PC-3 (cell line): ENCODE measurements at regions of chr11 and their contacts with region 1.

Region 1: GRCh38 chr11:57363131-57364080 is 17.5 kb downstream of the PRG3 start:
- DNase-seq: no peak
- ATAC-seq: no peak
- H3K4me3 ChIP-seq: no peak overlapping the region
- H3K27ac ChIP-seq: no peak overlapping the region
- H3K4me1 ChIP-seq: no peaks in the 10 kb centered on the region
- H3K27me3 ChIP-seq: 0 out of 2 replicates have a peak, but pooled peaks cover 17% of the 10 kb centered on the region
- CTCF ChIP-seq: no peak

Region 2: DNA sequence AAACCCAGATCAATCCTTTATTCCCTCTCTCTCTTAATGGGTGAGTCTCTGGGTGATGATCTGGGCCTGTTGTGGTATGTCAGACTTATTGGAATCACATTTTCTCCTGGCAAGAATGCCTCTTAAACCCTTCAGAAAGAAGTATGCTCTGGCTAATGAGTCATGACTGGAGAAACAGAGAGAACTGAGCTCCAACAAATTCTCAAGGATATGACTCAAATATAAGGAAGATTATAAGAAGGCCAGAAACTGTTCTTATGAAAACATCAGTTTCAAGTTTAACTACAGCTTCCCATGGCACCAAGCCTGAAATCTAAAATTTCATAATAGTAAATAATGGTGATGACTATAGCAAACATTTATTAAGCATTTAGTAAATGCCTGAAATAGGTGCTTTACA is 290.8 kb before region 1 on chr11:
- CTCF ChIA-PET with region 1: no interaction called
- POLR2A ChIA-PET with region 1: no interaction called
- intact Hi-C with region 1: no loop called
- DNase-seq: peak; percentile 97
- ATAC-seq: peak; percentile 80
- H3K4me3 ChIP-seq: no peak overlapping the region
- H3K27ac ChIP-seq: peak overlapping the region; percentile 92
- H3K4me1 ChIP-seq: peaks cover 27% of the 10 kb centered on the region
- H3K27me3 ChIP-seq: no peaks in the 10 kb centered on the region
- CTCF ChIP-seq: no peak

Region 3: DNA sequence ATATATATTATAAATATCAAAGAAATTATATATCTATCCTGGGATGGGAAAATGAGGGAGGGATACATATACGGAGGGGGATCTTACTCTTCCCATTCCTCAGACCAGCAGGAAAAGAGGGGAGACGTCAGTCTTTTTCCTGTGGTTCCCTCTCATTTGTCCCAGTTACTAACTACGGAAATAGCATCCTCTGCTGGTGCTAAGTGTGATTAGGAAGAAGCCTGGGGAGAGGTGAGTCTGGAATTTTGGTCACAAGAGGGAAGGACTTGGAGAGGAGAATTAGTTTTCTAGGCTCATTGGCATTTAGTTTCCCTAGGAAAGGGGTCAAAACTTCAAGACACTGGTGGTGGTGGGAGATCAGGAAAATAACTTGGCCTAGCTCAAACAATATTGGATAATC is 337.0 kb after region 1 on chr11:
- CTCF ChIA-PET with region 1: no interaction called
- POLR2A ChIA-PET with region 1: interaction called, 18 read pairs
- intact Hi-C with region 1: no loop called
- DNase-seq: no peak
- ATAC-seq: no peak
- H3K4me3 ChIP-seq: no peak overlapping the region
- H3K27ac ChIP-seq: no peak overlapping the region
- H3K4me1 ChIP-seq: no peaks in the 10 kb centered on the region
- H3K27me3 ChIP-seq: no peaks in the 10 kb centered on the region
- CTCF ChIP-seq: no peak